Esophagus muscularis mucosa (tissue), 4 donors: ENCODE measurements at regions of chr5 and their contacts with region 1.

Region 1: DNA sequence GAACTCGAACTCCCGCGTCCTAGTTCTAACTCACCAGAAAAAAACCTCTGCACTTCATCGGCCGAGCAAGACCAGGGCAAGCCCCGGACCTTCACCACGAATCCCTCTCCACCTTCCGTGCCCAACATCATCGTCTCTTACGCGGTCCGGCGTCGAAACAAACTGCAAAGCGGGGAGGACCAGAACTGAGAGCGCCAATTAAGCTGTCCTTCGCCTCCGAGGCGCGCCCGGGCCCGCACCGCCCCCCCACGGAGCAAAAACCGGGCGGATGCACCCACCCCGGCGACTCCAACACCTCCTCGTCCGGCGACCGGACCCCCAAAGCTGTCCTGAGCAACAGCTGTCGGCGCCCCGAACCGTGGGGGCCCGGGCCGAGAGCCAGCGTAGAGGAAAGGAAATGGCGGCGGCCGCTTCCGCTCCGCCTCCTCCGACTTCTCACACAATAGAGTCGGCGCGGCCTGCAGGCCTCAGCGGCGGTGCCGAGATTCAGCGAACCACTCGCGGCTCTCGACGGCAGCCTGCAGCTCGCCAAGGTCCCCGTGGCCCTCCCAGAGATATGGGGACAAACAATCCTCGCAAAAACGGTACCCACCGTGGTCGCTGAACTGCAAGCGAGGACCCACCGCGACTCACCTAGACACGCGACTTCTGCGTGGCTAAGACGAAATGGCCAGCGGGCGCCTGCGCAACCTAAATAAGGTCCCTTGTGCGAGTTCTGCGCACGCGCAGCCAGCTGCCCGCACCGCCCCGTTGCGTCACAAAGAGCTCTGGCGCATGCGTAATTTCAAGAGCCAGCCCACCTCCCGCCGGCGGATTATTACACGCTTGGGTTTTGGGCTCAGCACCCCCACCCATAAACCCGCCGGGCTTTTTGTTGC is at the start of gene HNRNPH1:
- DNase-seq: peak; percentile 100
- H3K4me3 ChIP-seq: peak within 1 kb of the TSS; percentile 75 to 100 (median 98)
- H3K27ac ChIP-seq: peak within 1 kb of the TSS; percentile 97 to 100 (median 100)
- H3K4me1 ChIP-seq: peaks cover 47 to 51% (median 50%) of the 10 kb centered on the region in 4 donors
- H3K27me3 ChIP-seq: no peaks in the 10 kb centered on the region
- CTCF ChIP-seq: peak in 1 of 3 experiments; percentile 32
- EP300 ChIP-seq: no peak
- POLR2A ChIP-seq: peak; percentile 99
- total RNA-seq, gene HNRNPH1: 234 to 369 (median 244) TPM

Region 2: DNA sequence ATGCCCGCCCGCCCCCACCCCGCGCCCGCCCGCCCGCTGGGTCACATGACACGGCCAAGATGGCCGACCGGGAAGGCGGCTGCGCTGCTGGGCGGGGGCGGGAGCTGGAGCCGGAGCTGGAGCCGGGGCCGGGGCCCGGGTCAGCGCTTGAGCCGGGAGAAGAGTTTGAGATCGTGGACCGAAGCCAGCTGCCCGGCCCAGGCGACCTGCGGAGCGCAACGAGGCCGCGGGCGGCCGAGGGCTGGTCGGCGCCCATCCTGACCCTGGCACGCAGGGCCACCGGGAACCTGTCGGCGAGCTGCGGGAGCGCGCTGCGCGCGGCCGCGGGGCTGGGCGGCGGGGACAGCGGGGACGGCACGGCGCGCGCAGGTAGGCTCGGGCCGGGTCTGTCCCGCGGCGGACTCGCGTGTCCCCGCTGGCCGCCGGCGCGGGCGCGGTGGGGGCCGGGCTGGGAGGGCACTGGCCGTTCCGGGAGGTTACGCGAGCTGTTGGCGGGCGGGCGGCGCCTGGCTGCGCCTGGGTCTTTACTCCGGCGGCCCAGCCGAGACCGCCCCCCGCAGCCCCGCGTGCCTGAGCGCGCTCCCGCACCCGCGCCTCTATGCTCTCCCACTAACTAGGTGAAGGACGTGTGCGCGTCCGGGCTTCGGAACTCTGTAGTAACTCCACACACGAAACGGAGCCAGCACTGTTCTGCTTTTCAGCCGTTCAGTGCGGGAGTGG is 72.6 kb before region 1 on chr5 and contains the start of gene RUFY1:
- intact Hi-C with region 1: loop called (anchors 5 kb)
- DNase-seq: no peak
- H3K4me3 ChIP-seq: peak within 1 kb of the TSS; percentile 80 to 90 (median 86)
- H3K27ac ChIP-seq: peak within 1 kb of the TSS; percentile 95 to 97 (median 97)
- H3K4me1 ChIP-seq: peaks cover 31 to 41% (median 38%) of the 10 kb centered on the region in 4 donors
- H3K27me3 ChIP-seq: no peaks in the 10 kb centered on the region
- CTCF ChIP-seq: no peak
- EP300 ChIP-seq: no peak
- POLR2A ChIP-seq: peak; percentile 80
- total RNA-seq, gene RUFY1: 39.9 to 59.8 (median 45.6) TPM